Mammary epithelial cell (primary cell): ENCODE measurements at regions of chr1 and their contacts with region 1.

Region 1: GRCh38 chr1:159132271-159132881 is 39.0 kb upstream of the CADM3 start:
- DNase-seq: peak; percentile 30
- H3K4me3 ChIP-seq: no peak overlapping the region
- H3K27ac ChIP-seq: no peak overlapping the region
- H3K4me1 ChIP-seq: no peaks in the 10 kb centered on the region
- H3K27me3 ChIP-seq: no peaks in the 10 kb centered on the region
- CTCF ChIP-seq: peak; percentile 84 to 90

Region 2: DNA sequence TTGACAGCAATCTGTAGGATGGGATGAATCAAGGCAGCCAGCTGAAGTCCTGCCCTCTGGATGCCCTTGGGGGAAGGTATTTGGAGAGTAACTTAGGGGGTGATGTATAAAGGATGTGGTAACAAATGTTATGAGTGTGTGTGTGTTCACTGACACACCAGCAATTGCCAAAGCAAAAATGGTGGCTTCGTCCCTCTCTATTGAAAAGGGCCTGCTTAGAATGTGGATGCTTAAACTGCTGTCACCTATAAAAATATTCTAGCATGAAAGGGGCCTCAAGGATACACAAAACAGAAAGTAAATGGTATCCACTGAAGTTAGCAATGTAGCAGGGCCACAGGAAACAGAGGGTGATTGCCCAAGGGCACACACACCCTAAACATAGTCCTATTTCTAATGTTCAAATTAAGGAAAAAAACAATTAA is 40.8 kb before region 1 on chr1:
- CTCF ChIA-PET with region 1: interaction called, 3 read pairs
- dilution Hi-C with region 1: no loop called
- in situ Hi-C with region 1: no loop called
- intact Hi-C with region 1: loop called (anchors 2 kb)
- DNase-seq: peak; percentile 70
- H3K4me3 ChIP-seq: peak overlapping the region in 2 of 3 experiments; percentile 3 to 20
- H3K27ac ChIP-seq: peak overlapping the region; percentile 89
- H3K4me1 ChIP-seq: peaks cover 57% of the 10 kb centered on the region
- H3K27me3 ChIP-seq: no peaks in the 10 kb centered on the region
- CTCF ChIP-seq: no peak

Region 3: GRCh38 chr1:159197561-159198557 is 65.5 kb after region 1 on chr1:
- CTCF ChIA-PET with region 1: no interaction called
- dilution Hi-C with region 1: no loop called
- in situ Hi-C with region 1: no loop called
- intact Hi-C with region 1: loop called (anchors 1 kb)
- DNase-seq: peak; percentile 54
- H3K4me3 ChIP-seq: no peak overlapping the region
- H3K27ac ChIP-seq: no peak overlapping the region
- H3K4me1 ChIP-seq: no peaks in the 10 kb centered on the region
- H3K27me3 ChIP-seq: no peaks in the 10 kb centered on the region
- CTCF ChIP-seq: peak; percentile 94

Region 4: GRCh38 chr1:159214149-159214760 is 81.9 kb after region 1 on chr1:
- CTCF ChIA-PET with region 1: interaction called, 9 read pairs
- dilution Hi-C with region 1: no loop called
- in situ Hi-C with region 1: no loop called
- intact Hi-C with region 1: loop called (anchors 1 kb)
- DNase-seq: peak; percentile 26
- H3K4me3 ChIP-seq: no peak overlapping the region
- H3K27ac ChIP-seq: no peak overlapping the region
- H3K4me1 ChIP-seq: peaks cover 3% of the 10 kb centered on the region
- H3K27me3 ChIP-seq: no peaks in the 10 kb centered on the region
- CTCF ChIP-seq: peak; percentile 93